ENCODE measurements at regions of chr1 and their contacts with region 1.

Region 1: DNA sequence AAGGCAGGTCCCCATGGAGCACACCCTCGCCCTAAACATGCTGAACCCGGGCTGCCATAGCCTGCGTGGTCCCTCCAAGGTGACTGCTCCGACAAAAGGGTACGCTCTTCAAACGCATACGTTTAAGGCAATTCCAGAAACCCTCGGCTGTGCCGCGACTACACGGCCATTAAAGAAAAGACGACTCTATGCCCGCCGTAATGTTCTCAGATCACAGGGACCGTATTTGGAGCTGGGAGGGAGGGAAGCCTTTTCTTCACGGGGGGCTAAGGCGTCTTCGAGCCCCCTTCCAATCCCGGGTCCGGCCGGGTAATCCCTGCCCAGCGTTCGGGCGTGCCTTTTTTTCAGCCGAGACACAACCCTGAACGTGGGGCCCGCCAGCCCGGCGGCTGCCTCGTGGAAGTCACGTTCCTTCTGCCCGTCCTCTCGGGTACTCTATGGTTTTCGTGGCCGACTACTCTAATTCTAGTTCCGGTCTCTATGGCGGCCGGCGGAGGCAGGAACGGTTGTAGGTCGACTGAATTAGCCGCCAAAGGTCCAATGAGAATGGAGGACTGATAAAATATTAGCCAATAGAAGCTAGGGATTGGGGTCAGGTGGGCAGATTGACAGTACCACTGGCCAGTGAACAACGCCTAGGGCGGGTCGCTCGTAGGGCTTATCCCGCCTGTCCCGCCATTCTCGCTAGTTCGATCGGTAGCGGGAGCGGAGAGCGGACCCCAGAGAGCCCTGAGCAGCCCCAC is at the start of gene YBX1:
- DNase-seq: peak; percentile 98
- ATAC-seq: peak; percentile 89
- H3K4me3 ChIP-seq: peak within 1 kb of the TSS; percentile 79
- H3K27ac ChIP-seq: peak within 1 kb of the TSS; percentile 68
- H3K4me1 ChIP-seq: peaks cover 38% of the 10 kb centered on the region
- H3K27me3 ChIP-seq: no peaks in the 10 kb centered on the region
- CTCF ChIP-seq: no peak
- total RNA-seq, gene YBX1: 1,259 and 1,468 TPM in 2 replicates

Region 2: DNA sequence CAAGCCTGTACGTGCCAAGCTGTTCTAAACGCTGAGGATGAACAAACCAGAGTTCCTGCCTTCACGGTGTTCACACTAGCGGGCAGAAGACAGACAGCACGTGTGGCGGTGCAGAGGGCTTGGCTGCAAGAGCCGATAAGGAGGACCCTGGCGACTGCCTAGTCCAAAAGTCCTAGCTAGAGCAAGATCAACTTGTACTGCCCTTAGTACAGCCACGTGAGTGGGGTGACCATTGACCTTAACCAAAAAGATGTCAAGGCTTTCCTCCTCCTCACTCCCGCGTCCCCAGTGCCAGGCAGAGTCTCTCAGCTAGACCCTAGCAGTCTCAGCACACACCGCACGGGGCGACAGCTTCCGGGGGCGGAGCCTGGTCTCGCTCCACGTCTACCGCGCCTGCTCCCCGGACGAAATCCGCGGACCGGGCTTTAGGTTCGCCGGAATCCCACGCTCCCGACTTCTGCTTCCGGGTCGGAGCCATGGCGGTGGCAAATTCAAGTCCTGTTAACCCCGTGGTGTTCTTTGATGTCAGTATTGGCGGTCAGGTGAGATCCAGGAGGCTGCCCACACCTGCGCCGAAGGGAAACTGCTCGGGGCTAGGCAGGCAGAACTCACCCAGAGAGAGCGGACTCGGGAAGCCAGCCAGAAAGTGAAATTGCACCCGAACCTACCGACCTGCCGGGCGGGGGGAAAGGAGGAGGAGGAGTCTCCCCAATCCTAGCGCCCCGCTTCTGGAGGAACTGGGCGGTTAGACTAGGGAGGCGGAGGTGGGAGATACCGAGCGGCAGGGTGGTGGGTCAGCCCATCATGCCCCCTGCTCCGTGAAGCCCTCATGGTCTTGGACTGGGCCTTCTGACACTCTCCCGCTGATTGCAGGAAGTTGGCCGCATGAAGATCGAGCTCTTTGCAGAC is 23.7 kb before region 1 on chr1 and contains the start of gene PPIH:
- CTCF ChIA-PET with region 1: no interaction called
- POLR2A ChIA-PET with region 1: no interaction called
- intact Hi-C with region 1: loop called (anchors 2 kb)
- DNase-seq: peak; percentile 92
- ATAC-seq: peak; percentile 99
- H3K4me3 ChIP-seq: peak within 1 kb of the TSS; percentile 97
- H3K27ac ChIP-seq: peak within 1 kb of the TSS; percentile 64
- H3K4me1 ChIP-seq: peaks cover 22% of the 10 kb centered on the region
- H3K27me3 ChIP-seq: peaks cover 6% of the 10 kb centered on the region; the same call in 1 of the 2 replicates
- CTCF ChIP-seq: no peak
- total RNA-seq, gene PPIH: 81.5 and 103 TPM in 2 replicates

Measured in PC-3 (cell line).